HepG2 (cell line): ENCODE measurements at regions of chr11 and their contacts with region 1.

Region 1: GRCh38 chr11:4072668-4073285 is 21.8 kb upstream of the RRM1 start:
- DNase-seq: peak; percentile 72
- ATAC-seq: peak; percentile 79
- H3K4me3 ChIP-seq: no peak overlapping the region
- H3K27ac ChIP-seq: no peak overlapping the region
- H3K4me1 ChIP-seq: no peaks in the 10 kb centered on the region
- H3K27me3 ChIP-seq: no peaks in the 10 kb centered on the region
- CTCF ChIP-seq: peak; percentile 88
- EP300 ChIP-seq: no peak
- POLR2A ChIP-seq: no peak
- RAD21 ChIP-seq: peak; percentile 88

Region 2: DNA sequence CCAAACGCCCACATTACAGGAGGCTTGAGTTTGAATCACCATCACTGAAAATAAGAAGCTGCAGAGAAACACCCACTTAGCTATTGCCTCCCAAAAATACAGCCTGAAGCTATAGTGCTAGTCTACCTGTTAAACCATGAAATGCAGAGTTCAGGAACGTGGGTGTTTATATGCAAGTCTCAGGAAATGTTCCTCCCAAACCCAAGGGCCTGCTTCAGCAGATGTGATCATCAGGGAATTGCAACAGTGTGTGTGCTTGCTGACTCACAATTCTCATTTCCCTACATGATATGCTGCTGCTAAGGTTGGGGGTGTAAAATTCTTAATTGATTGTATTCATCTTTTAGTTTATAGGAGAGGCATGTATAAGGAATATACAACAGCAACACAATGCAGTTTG is 325.1 kb before region 1 on chr11:
- CTCF ChIA-PET with region 1: no interaction called
- POLR2A ChIA-PET with region 1: no interaction called
- in situ Hi-C with region 1: no loop called
- intact Hi-C with region 1: no loop called
- DNase-seq: no peak
- ATAC-seq: no peak
- H3K4me3 ChIP-seq: no peak overlapping the region
- H3K27ac ChIP-seq: no peak overlapping the region
- H3K4me1 ChIP-seq: no peaks in the 10 kb centered on the region
- H3K27me3 ChIP-seq: no peaks in the 10 kb centered on the region
- CTCF ChIP-seq: no peak
- EP300 ChIP-seq: no peak
- POLR2A ChIP-seq: no peak
- RAD21 ChIP-seq: no peak

Region 3: DNA sequence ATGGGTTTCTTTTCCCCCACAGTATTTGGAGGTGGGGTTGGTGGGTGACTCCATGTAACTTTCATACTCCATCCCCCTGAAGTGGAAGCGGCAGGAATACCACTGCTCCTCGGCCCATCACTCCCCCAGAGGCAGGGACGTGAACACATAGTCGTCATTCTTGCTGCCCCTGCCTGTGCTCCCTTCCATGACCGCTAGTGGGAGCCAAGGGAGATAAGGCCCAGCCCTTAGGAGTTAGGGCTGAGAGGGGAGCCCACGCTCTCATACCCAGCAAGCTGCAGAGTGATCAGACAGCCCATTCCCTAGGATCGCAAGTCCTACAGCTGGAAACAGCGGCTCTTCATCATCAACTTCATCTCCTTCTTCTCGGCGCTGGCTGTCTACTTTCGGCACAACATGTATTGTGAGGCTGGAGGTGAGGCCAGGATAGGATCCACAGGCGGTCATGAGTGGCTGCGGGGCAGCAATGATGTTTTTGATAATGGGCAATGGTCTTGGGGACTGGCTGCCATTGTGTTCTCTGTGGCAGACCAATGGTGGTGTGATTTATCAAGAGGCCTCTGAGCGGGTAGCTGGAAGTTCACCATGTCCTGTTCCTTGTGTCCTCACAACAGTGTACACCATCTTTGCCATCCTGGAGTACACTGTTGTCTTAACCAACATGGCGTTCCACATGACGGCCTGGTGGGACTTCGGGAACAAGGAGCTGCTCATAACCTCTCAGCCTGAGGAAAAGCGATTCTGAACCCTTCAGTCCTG is 247.9 kb before region 1 on chr11:
- CTCF ChIA-PET with region 1: interaction called, 5 read pairs
- POLR2A ChIA-PET with region 1: no interaction called
- in situ Hi-C with region 1: no loop called
- intact Hi-C with region 1: loop called (anchors 1 kb)
- DNase-seq: peak; percentile 69
- ATAC-seq: peak; percentile 94
- H3K4me3 ChIP-seq: no peak overlapping the region
- H3K27ac ChIP-seq: no peak overlapping the region
- H3K4me1 ChIP-seq: no peaks in the 10 kb centered on the region
- H3K27me3 ChIP-seq: no peaks in the 10 kb centered on the region
- CTCF ChIP-seq: peak; percentile 86
- EP300 ChIP-seq: no peak
- POLR2A ChIP-seq: no peak
- RAD21 ChIP-seq: peak; percentile 58

Region 4: GRCh38 chr11:3849297-3849874 is 223.4 kb before region 1 on chr11:
- CTCF ChIA-PET with region 1: interaction called, 30 read pairs
- POLR2A ChIA-PET with region 1: interaction called, 15 read pairs
- in situ Hi-C with region 1: loop called (anchors 5 kb)
- intact Hi-C with region 1: loop called (anchors 1 kb)
- DNase-seq: peak; percentile 41
- ATAC-seq: peak; percentile 86
- H3K4me3 ChIP-seq: no peak overlapping the region
- H3K27ac ChIP-seq: no peak overlapping the region
- H3K4me1 ChIP-seq: peaks cover 28% of the 10 kb centered on the region
- H3K27me3 ChIP-seq: no peaks in the 10 kb centered on the region
- CTCF ChIP-seq: peak; percentile 70
- EP300 ChIP-seq: no peak
- POLR2A ChIP-seq: no peak
- RAD21 ChIP-seq: peak; percentile 63; the same call in 1 of the 2 replicates

Region 5: GRCh38 chr11:3942160-3942955 is 130.4 kb before region 1 on chr11:
- CTCF ChIA-PET with region 1: no interaction called
- POLR2A ChIA-PET with region 1: no interaction called
- in situ Hi-C with region 1: no loop called
- intact Hi-C with region 1: loop called (anchors 1 kb)
- DNase-seq: peak; percentile 84
- ATAC-seq: peak; percentile 99
- H3K4me3 ChIP-seq: peak overlapping the region in 2 of 3 experiments; percentile 2 to 20; a peak in 1 of 6 replicates
- H3K27ac ChIP-seq: peak overlapping the region; percentile 65
- H3K4me1 ChIP-seq: peaks cover 43% of the 10 kb centered on the region
- H3K27me3 ChIP-seq: no peaks in the 10 kb centered on the region
- CTCF ChIP-seq: peak; percentile 83
- EP300 ChIP-seq: peak in 1 of 2 experiments; percentile 73; a peak in 1 of 4 replicates
- POLR2A ChIP-seq: no peak
- RAD21 ChIP-seq: peak; percentile 73

Region 6: GRCh38 chr11:4039011-4039410 is 33.8 kb before region 1 on chr11:
- CTCF ChIA-PET with region 1: no interaction called
- POLR2A ChIA-PET with region 1: no interaction called
- in situ Hi-C with region 1: no loop called
- intact Hi-C with region 1: no loop called
- DNase-seq: no peak
- ATAC-seq: no peak
- H3K4me3 ChIP-seq: no peak overlapping the region
- H3K27ac ChIP-seq: no peak overlapping the region
- H3K4me1 ChIP-seq: peaks cover 19% of the 10 kb centered on the region
- H3K27me3 ChIP-seq: no peaks in the 10 kb centered on the region
- CTCF ChIP-seq: no peak
- EP300 ChIP-seq: no peak
- POLR2A ChIP-seq: no peak
- RAD21 ChIP-seq: no peak

Region 7: DNA sequence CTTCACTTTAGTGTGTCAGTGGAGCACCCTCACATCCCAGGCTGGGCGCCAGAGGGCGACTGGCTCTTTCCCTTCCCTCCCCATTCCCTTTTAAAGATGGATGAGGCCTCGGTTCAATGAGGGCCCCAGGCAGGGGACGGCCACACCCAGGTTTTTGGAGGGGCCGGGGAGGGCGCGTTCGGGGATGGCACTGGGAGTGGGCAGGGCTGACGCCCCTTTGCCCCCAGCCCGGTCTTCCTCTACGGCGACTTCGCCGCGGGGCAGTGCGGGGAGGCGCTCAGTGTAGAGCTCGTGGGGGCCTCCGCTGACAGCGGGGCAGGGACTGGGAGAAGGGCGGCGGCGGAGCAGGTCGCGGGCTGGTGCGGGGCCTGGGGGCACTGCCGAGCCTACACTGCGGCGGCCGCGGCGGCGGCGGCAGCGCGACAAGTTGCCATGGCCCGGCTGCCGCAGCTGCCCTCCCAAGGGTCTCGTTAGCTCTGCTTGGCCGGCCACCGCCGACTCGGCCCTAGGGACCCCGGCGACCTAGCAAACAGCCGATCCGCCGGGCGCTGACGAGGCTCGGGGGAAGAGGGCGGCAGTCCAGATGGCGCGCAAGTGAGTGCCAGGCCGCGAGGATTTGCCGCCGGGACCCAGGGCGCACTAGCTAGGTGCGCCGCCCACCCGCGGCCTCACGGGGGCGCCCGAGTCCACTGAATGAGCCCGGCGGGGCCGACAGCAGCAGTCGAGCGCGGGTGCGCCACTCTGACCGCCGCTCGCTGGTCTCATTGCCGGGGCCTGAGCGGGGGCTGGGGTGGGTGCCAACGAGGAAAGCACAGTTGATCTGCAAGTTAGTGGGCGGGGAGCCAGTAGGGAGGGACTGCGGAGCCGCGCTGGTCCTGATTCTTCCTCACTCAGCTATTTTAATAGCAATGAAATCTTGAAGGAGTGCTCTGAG is 114.5 kb after region 1 on chr11:
- CTCF ChIA-PET with region 1: no interaction called
- POLR2A ChIA-PET with region 1: no interaction called
- in situ Hi-C with region 1: no loop called
- intact Hi-C with region 1: no loop called
- DNase-seq: peak; percentile 39
- ATAC-seq: peak; percentile 95
- H3K4me3 ChIP-seq: peak overlapping the region; percentile 59 to 75 (median 74)
- H3K27ac ChIP-seq: no peak overlapping the region
- H3K4me1 ChIP-seq: peaks cover 5% of the 10 kb centered on the region; the same call in 1 of the 2 replicates
- H3K27me3 ChIP-seq: peaks cover 9 to 53% of the 10 kb centered on the region in 2 experiments
- CTCF ChIP-seq: peak; percentile 96
- EP300 ChIP-seq: no peak
- POLR2A ChIP-seq: no peak
- RAD21 ChIP-seq: peak; percentile 97